Activated T-helper 1 cell treated with anti-CD3 and anti-CD28 coated beads, Interleukin-12 subunit alpha, Interleukin-12 subunit beta, Interleukin-2, Interleukin-4 antibody, amounts not matched to agents 30 ng/mL and 10 ng/mL and 1 ng/mL, durations not matched to agents 14 hours and 24 hours and 36 hours (primary cell): ENCODE measurements at regions of chr17 and their contacts with region 1.

Region 1: DNA sequence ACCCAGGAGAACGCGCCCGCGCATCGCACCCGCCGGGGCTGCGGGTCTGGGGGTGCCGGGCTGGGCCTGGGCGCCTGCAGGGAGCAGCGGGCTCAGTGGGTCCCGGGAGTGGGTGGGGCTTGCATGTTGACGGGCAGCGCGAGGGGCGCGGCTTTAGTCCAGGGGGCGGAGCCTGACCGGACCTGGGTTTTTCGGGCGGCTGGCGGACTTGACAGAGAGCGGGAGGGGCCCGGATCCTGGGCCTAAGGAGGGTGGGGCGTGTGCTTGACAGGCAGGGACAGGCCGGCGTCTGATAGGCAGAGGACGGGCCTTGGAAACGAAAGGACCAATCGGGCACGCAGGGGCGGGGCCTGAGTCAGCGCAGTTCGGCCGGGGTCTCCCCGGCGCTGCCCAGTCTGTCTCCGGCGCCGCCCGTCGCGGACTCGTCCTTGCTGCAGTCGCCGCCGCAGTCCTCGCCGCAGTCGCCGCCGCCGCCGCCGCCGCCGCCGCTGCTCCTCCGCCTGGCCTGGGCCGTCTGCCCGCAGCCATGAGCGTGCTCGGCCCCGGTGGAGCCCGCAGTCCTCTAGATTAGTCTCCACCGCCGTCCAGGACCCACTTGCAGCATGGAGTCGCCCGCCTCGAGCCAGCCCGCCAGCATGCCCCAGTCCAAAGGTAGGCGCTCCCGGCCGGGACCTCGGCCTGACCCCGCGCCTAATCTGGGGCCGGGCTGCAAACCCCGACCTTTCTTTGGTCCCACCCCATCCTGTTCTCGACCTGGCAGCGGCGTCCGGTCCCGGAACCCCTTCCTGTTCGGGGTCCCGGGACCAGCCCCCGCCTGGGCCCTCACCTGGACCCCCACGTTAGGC is at the start of gene MAP2K3:
- DNase-seq: peak; percentile 97
- H3K4me3 Mint-ChIP-seq: peak within 1 kb of the TSS; percentile 100
- H3K27ac Mint-ChIP-seq: peak within 1 kb of the TSS; percentile 96
- H3K4me1 Mint-ChIP-seq: peaks cover 37% of the 10 kb centered on the region
- H3K27me3 Mint-ChIP-seq: peaks cover 5% of the 10 kb centered on the region
- total RNA-seq, gene MAP2K3: 177 and 185 TPM in 2 replicates

Region 2: DNA sequence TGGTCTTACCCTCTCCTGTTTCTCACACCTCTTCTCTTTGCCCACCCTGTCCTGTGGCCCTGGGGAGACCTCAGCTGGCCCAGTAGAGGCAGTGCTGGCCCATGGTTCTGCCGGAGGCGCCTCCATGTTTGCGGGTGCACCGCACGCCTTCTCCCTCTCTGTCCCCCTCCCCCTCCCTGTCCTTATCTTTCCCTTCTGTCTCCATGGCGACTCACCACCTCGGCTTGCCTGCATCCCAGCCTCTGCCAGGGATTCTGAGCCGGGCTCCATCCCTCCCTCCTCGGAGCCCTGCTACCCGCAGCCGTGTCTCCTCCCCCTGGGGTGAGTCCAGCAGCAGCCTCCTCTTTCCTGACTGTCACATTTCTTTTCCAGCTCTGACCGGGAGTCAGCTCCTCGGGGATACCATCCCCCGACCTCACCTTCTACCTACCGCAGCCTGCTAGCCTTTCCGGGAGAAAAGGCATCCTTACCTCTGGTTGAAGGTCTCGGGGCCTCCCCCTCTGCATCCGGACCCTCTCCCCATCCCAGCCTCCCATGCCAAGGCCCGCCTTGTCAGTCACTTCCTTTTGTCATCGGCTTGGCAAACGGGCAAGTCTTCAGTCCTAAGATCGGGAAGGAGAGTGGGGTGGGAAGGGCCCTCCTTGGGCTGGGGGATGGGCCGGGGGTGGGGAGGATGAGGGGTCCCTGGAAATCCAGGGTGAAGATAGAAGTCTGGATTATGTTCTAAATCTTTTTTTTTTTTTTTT is 1873.5 kb before region 1 on chr17 and contains the start of gene RNF112:
- intact Hi-C with region 1: no loop called
- DNase-seq: no peak
- H3K4me3 Mint-ChIP-seq: no peak within 1 kb of the TSS
- H3K27ac Mint-ChIP-seq: no peak within 1 kb of the TSS
- H3K4me1 Mint-ChIP-seq: no peaks in the 10 kb centered on the region
- H3K27me3 Mint-ChIP-seq: peaks cover 5% of the 10 kb centered on the region
- total RNA-seq, gene RNF112: not detected in 2 replicates

Region 3: GRCh38 chr17:19977311-19978208 is 1307.0 kb before region 1 on chr17 and contains the start of gene AKAP10:
- intact Hi-C with region 1: loop called (anchors 10 kb)
- DNase-seq: peak; percentile 88
- H3K4me3 Mint-ChIP-seq: peak within 1 kb of the TSS; percentile 91
- H3K27ac Mint-ChIP-seq: peak within 1 kb of the TSS; percentile 94
- H3K4me1 Mint-ChIP-seq: peaks cover 42% of the 10 kb centered on the region
- H3K27me3 Mint-ChIP-seq: no peaks in the 10 kb centered on the region
- total RNA-seq, gene AKAP10: 38.8 and 39.3 TPM in 2 replicates

Region 4: GRCh38 chr17:21119247-21119918 is 165.2 kb before region 1 on chr17:
- intact Hi-C with region 1: loop called (anchors 2 kb)
- DNase-seq: peak; percentile 53
- H3K4me3 Mint-ChIP-seq: no peak overlapping the region
- H3K27ac Mint-ChIP-seq: no peak overlapping the region
- H3K4me1 Mint-ChIP-seq: peaks cover 12% of the 10 kb centered on the region
- H3K27me3 Mint-ChIP-seq: peaks cover 12% of the 10 kb centered on the region

Region 5: GRCh38 chr17:21214015-21214776 is 70.3 kb before region 1 on chr17 and contains the start of gene TMEM11:
- intact Hi-C with region 1: loop called (anchors 1 kb)
- DNase-seq: peak; percentile 95
- H3K4me3 Mint-ChIP-seq: peak within 1 kb of the TSS; percentile 97
- H3K27ac Mint-ChIP-seq: peak within 1 kb of the TSS; percentile 91
- H3K4me1 Mint-ChIP-seq: peaks cover 55% of the 10 kb centered on the region
- H3K27me3 Mint-ChIP-seq: no peaks in the 10 kb centered on the region
- total RNA-seq, gene TMEM11: 33.5 and 35.6 TPM in 2 replicates

Region 6: GRCh38 chr17:21263351-21263750 is 21.2 kb before region 1 on chr17:
- intact Hi-C with region 1: no loop called
- DNase-seq: no peak
- H3K4me3 Mint-ChIP-seq: no peak overlapping the region
- H3K27ac Mint-ChIP-seq: no peak overlapping the region
- H3K4me1 Mint-ChIP-seq: peaks cover 11% of the 10 kb centered on the region
- H3K27me3 Mint-ChIP-seq: no peaks in the 10 kb centered on the region

Region 7: GRCh38 chr17:21318439-21318838 is 33.9 kb after region 1 on chr17:
- intact Hi-C with region 1: loop called (anchors 2 kb)
- DNase-seq: no peak
- H3K4me3 Mint-ChIP-seq: no peak overlapping the region
- H3K27ac Mint-ChIP-seq: no peak overlapping the region
- H3K4me1 Mint-ChIP-seq: no peaks in the 10 kb centered on the region
- H3K27me3 Mint-ChIP-seq: peaks cover 3% of the 10 kb centered on the region

Region 8: DNA sequence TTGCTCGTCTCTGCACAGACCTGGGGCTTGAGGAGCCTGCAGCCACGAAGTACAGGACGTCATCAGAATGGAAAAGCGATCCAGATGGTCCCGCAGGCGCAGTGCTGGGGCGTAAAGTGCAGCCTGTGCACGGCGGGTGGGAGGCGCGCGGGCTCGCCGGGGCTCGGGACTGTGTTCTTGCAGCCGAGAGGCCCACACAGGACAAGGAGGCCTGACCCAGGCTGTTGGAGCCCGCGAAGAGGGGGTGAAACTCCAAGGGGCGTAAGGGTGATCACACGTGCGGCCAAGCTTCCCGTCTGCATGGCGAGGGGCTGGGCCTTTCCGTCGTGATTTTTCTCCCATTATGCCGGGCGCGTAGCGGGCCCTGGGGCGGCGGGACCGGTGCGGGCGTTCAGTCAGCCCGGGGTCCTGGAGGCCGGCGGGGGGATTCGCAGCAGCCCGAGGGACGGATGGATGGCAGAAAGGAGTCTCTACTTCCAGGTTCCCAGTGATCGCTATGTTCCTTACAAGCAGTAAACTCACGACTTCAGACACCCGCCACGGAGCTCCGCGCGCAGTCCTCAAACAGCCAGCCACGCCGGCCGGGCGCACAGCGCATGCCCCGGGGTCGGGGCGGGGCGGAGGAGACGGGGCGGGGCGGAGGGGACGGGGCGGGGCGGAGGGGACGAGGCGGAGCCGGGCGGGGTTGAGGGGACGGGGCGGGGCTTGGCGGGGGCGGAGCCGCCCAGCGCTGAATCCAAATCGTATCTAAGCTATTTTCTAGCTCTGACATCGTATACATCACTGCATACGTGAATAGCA is 266.7 kb after region 1 on chr17:
- intact Hi-C with region 1: loop called (anchors 1 kb)
- DNase-seq: peak; percentile 66
- H3K4me3 Mint-ChIP-seq: peak overlapping the region; percentile 77
- H3K27ac Mint-ChIP-seq: peak overlapping the region; percentile 64
- H3K4me1 Mint-ChIP-seq: peaks cover 27% of the 10 kb centered on the region
- H3K27me3 Mint-ChIP-seq: peaks cover 29% of the 10 kb centered on the region